MCF 10A (cell line): ENCODE measurements at regions of chr1 and their contacts with region 1.

Region 1: GRCh38 chr1:15994590-15995351 is 9.3 kb upstream of the SRARP start:
- DNase-seq: peak; percentile 77
- H3K4me3 Mint-ChIP-seq: no peak overlapping the region
- H3K27ac Mint-ChIP-seq: no peak overlapping the region
- H3K4me1 Mint-ChIP-seq: no peaks in the 10 kb centered on the region
- H3K27me3 Mint-ChIP-seq: no peaks in the 10 kb centered on the region
- CTCF ChIP-seq: peak; percentile 81

Region 2: GRCh38 chr1:15885701-15886610 is 108.8 kb before region 1 on chr1:
- CTCF ChIA-PET with region 1: no interaction called
- POLR2A ChIA-PET with region 1: interaction called, 4 read pairs
- intact Hi-C with region 1: loop called (anchors 1 kb)
- DNase-seq: peak; percentile 94
- H3K4me3 Mint-ChIP-seq: peak overlapping the region; percentile 74
- H3K27ac Mint-ChIP-seq: peak overlapping the region; percentile 79
- H3K4me1 Mint-ChIP-seq: peaks cover 18% of the 10 kb centered on the region
- H3K27me3 Mint-ChIP-seq: no peaks in the 10 kb centered on the region
- CTCF ChIP-seq: peak; percentile 33

Region 3: GRCh38 chr1:15949453-15950245 is 45.1 kb before region 1 on chr1:
- CTCF ChIA-PET with region 1: no interaction called
- POLR2A ChIA-PET with region 1: interaction called, 4 read pairs
- intact Hi-C with region 1: loop called (anchors 5 kb)
- DNase-seq: peak; percentile 95
- H3K4me3 Mint-ChIP-seq: peak overlapping the region; percentile 47
- H3K27ac Mint-ChIP-seq: peak overlapping the region; percentile 87
- H3K4me1 Mint-ChIP-seq: peaks cover 59% of the 10 kb centered on the region
- H3K27me3 Mint-ChIP-seq: no peaks in the 10 kb centered on the region
- CTCF ChIP-seq: no peak

Region 4: DNA sequence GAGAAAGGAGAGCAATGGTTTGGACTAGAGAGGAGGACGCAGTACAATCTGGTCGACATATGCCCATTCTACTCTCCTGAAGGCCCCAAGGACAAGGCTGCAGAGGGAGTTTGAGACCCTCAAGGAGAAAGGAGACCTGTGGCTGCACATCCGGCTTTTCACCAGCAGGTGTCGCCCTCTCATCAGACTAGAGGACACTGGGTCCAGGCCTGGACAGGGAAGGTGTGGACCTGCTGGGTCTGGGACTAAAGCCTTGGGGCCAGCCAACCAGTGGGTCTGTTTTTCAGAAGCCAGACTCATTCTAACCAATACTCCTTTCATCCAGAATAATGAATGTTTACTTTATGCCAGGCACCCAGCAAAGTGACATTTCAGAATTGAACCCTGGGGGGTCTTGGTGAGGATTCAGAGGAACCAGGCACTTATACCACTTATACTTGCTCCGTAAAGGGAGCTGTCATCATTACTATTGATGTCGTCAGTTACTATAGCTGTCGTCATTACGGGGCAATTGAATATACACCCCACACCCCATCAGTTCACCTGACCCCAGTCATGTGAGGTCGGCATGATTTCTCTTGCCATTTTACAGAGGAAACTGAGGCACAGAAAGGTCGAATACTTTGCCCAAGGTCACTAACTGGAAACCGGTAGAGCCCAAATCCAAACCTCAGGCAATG is 14.4 kb after region 1 on chr1:
- CTCF ChIA-PET with region 1: interaction called, 13 read pairs
- POLR2A ChIA-PET with region 1: no interaction called
- intact Hi-C with region 1: no loop called
- DNase-seq: peak; percentile 81
- H3K4me3 Mint-ChIP-seq: no peak overlapping the region
- H3K27ac Mint-ChIP-seq: no peak overlapping the region
- H3K4me1 Mint-ChIP-seq: peaks cover 15% of the 10 kb centered on the region
- H3K27me3 Mint-ChIP-seq: no peaks in the 10 kb centered on the region
- CTCF ChIP-seq: peak; percentile 97